ENCODE measurements at regions of chr4 and their contacts with region 1.

Region 1: DNA sequence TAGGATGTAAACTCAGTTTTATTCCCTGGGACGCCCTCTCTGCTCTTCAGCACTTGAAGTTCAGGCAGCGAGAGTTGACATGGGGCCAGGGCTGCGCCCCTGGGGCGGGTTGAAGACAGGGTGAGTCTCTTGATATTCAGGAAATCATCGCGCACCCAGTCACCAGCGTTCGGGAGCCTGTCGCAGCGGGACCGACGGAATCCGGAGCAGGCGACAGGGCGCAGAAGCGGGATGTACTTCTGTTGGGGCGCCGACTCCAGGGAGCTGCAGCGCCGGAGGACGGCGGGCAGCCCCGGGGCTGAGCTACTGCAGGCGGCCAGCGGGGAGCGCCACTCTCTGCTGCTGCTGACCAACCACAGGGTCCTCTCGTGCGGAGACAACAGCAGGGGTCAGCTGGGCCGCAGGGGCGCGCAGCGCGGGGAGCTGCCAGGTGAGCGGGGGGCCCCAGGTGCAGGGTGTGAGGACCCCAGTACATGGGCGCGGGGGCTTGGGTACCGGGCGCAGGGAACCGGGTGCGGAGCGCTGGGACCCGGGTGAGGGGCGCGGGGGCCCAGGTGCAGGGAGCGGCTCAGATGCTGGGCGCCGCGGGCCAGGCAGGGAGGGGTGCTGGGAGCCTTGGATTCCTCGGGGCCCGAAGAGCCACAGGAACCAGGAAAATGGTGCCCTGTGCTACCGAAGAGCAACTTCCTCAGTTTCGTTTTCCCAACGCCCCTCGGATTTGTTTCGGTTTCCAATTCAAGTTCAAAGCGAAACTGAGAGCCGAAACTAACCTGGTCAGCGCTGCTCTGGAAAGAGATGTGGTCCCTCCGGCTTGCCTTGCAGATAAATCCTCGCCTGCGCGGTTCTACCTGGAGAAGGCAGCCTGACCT is at the start of gene HERC6:
- DNase-seq: peak; percentile 25 to 59
- ATAC-seq: peak; percentile 90 to 92
- H3K4me3 ChIP-seq: peak within 1 kb of the TSS; percentile 81 to 99 (median 96)
- H3K27ac ChIP-seq: peak within 1 kb of the TSS; percentile 71 to 88 (median 81)
- H3K4me1 ChIP-seq: no peaks in the 10 kb centered on the region
- H3K27me3 ChIP-seq: no peaks in the 10 kb centered on the region
- CTCF ChIP-seq: peak; percentile 47 to 77 (median 60)
- POLR2A ChIP-seq: no peak
- total RNA-seq, gene HERC6: 0.42 to 1.6 (median 1.0) TPM

Region 2: DNA sequence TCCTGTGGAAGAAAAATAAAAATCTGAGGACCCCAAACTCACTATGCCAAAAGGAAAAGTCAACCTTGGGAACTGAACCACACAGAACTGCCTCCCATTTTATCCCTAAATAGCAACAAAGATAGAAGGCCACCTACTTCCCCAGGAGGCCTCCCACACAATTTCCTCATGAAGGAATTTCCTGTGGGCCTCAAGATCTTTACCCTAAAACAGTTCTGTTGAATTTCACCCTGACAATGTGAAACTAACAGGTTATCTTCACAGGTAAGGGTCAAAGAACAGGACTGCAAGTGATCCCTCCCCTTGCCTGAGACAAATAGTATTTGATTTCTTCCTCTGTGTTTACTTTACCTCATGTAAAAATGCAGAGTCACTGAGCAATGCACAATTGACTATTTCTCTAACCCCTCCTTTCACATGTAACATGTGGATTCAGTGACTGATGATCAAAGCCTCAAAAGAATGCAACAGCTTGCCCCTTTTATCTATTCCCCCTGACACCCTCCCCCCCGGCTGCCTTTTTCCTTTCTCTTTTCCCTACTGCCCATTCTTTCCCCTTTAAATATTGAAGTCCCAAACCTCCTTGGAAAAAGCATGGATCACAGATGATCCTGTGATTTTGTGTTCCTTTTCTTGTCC is 512.8 kb before region 1 on chr4:
- in situ Hi-C with region 1: no loop called
- intact Hi-C with region 1: no loop called
- DNase-seq: no peak
- ATAC-seq: no peak
- H3K4me3 ChIP-seq: no peak overlapping the region
- H3K27ac ChIP-seq: no peak overlapping the region
- H3K4me1 ChIP-seq: peaks cover 0 to 2% of the 10 kb centered on the region in 2 donors
- H3K27me3 ChIP-seq: no peaks in the 10 kb centered on the region
- CTCF ChIP-seq: no peak
- POLR2A ChIP-seq: no peak

Region 3: DNA sequence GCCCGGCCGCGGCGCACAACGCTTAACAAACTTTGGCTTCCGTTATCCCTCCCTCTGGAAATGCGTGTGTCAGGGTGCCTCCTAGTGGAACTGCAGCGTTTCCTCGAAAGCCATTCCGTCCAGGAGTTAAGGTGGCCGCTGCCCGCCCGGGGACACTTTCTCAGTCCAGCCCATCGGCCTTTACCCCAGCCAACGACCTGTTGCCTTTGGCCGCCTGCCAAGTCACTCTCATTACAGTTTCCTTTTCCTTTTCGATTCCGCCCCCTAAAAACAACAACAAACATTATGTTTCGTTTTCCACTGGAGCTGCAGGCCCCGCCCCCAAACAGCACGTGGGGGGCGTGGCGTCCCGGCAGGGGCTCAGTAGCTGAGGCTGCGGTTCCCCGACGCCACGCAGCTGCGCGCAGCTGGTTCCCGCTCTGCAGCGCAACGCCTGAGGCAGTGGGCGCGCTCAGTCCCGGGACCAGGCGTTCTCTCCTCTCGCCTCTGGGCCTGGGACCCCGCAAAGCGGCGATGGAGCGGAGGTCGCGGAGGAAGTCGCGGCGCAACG is 77.9 kb after region 1 on chr4 and contains the start of gene HERC5:
- in situ Hi-C with region 1: no loop called
- intact Hi-C with region 1: loop called (anchors 2 kb)
- DNase-seq: peak; percentile 61 to 82
- ATAC-seq: peak; percentile 88 to 95
- H3K4me3 ChIP-seq: peak within 1 kb of the TSS; percentile 67 to 98 (median 71)
- H3K27ac ChIP-seq: peak within 1 kb of the TSS; percentile 53 to 77 (median 63)
- H3K4me1 ChIP-seq: no peaks in the 10 kb centered on the region
- H3K27me3 ChIP-seq: no peaks in the 10 kb centered on the region
- CTCF ChIP-seq: peak; percentile 45 to 68 (median 62)
- POLR2A ChIP-seq: peak; percentile 34 to 60
- total RNA-seq, gene HERC5: 0.55 to 1.5 (median 1.1) TPM

Region 4: GRCh38 chr4:89752932-89753581 is 1374.1 kb after region 1 on chr4:
- in situ Hi-C with region 1: no loop called
- intact Hi-C with region 1: no loop called
- DNase-seq: no peak
- ATAC-seq: no peak
- H3K4me3 ChIP-seq: no peak overlapping the region
- H3K27ac ChIP-seq: no peak overlapping the region
- H3K4me1 ChIP-seq: no peaks in the 10 kb centered on the region
- H3K27me3 ChIP-seq: no peaks in the 10 kb centered on the region
- CTCF ChIP-seq: no peak
- POLR2A ChIP-seq: no peak

Measured in gastrocnemius medialis (tissue), 4 donors.